OCI-LY7 (cell line): ENCODE measurements at regions of chr1 and their contacts with region 1.

Region 1: GRCh38 chr1:28886731-28887418 is 27.5 kb upstream of the EPB41 start:
- DNase-seq: peak; percentile 94
- H3K4me3 ChIP-seq: peak overlapping the region; percentile 92
- H3K27ac ChIP-seq: peak overlapping the region; percentile 67
- H3K4me1 ChIP-seq: peaks cover 53% of the 10 kb centered on the region
- CTCF ChIP-seq: no peak

Region 2: DNA sequence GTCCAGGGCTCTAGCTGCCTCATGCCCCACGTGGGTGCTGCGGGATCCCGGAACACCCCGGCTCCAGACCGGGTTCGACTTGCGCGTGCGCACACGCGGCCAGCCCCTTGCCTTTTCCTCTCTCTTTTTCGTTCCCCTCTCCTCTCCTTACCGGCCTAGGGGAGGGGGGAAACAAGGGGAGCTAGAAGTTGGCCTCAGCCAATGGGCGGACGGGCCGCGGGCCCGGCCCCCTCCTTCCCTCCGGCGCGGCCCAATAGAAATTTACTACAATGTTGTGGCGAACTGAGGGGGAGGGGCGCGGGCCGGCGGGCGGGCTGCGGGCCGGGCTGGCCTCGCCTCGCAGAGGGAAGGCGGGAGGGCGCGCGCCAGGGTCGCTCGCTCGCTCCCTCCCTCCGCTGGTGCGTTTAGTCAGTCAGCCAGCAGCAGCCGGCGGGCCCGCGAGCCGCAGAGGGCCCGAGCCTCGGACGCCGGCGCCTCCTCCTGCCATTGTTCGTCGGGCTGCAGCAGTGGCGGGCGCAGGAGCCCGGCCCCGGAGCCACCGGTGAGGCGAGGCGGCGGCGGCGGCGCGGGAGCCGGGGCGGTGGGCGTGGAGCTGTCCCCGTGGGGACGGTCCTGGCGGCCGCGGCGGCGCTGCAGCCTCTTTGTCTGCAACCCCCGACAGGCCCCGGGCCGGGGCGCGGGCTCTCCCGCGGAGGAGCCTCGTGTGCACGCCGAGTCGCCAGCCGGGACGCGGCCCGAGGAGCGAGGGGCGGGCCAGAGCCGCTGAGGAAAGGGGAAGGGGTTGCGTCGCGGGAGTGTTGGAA is 27.6 kb after region 1 on chr1 and contains the start of gene EPB41:
- CTCF ChIA-PET with region 1: interaction called, 3 read pairs
- POLR2A ChIA-PET with region 1: interaction called, 4 read pairs
- intact Hi-C with region 1: loop called (anchors 1 kb)
- DNase-seq: peak; percentile 97
- H3K4me3 ChIP-seq: peak within 1 kb of the TSS; percentile 92
- H3K27ac ChIP-seq: peak within 1 kb of the TSS; percentile 68
- H3K4me1 ChIP-seq: peaks cover 19% of the 10 kb centered on the region
- CTCF ChIP-seq: no peak
- total RNA-seq, gene EPB41: 103 and 109 TPM in 2 replicates

Region 3: GRCh38 chr1:29033829-29034466 is 147.1 kb after region 1 on chr1:
- CTCF ChIA-PET with region 1: interaction called, 8 read pairs
- POLR2A ChIA-PET with region 1: interaction called, 4 read pairs
- intact Hi-C with region 1: loop called (anchors 1 kb)
- DNase-seq: peak; percentile 64
- H3K4me3 ChIP-seq: no peak overlapping the region
- H3K27ac ChIP-seq: no peak overlapping the region
- H3K4me1 ChIP-seq: no peaks in the 10 kb centered on the region
- CTCF ChIP-seq: peak; percentile 93

Region 4: GRCh38 chr1:29120961-29121485 is 234.1 kb after region 1 on chr1:
- CTCF ChIA-PET with region 1: no interaction called
- POLR2A ChIA-PET with region 1: no interaction called
- intact Hi-C with region 1: loop called (anchors 1 kb)
- DNase-seq: peak; percentile 76
- H3K4me3 ChIP-seq: no peak overlapping the region
- H3K27ac ChIP-seq: no peak overlapping the region
- H3K4me1 ChIP-seq: no peaks in the 10 kb centered on the region
- CTCF ChIP-seq: peak; percentile 86

Region 5: DNA sequence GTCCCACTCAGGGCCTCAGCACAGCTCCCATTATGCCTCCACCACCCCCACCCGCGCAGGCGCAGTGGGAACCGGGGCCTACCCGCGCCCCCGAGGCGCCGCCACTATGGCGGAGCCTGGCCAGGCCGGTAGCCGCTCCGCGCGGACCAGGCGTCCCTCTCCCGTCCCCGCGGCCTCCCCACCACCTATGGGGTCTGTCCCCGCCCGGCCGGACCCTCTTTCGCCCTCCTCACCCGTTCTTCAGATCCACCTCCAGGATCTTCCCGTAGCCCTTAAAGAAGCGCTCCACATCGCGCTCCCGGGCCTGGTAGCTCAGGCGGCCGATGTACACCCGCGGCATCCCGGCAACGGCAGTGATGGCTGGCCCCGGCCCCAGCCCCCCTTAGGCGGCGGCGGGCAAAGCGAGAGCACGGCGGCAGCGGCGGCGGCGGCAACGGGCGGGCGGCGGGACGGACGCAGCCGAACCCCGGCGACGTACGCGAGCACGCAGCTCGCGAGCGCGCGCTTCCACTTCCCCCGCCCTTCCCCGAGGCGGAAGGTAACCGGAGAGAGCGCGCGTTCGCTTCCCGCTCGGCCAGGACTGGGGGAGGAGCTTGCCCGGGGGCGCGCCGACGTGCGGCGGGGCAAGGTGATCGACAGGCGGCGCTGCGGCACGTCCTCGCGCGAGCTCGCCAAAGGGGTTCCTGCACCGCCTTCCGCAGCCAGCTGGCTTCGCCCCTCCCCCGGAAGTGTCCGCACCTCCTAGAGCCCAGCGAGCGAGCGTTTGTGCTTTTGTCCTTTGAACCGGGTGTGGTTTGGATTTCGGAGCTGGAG is 294.7 kb after region 1 on chr1 and contains the start of gene SRSF4:
- CTCF ChIA-PET with region 1: interaction called, 5 read pairs
- POLR2A ChIA-PET with region 1: interaction called, 7 read pairs
- intact Hi-C with region 1: loop called (anchors 5 kb)
- DNase-seq: peak; percentile 99
- H3K4me3 ChIP-seq: peak within 1 kb of the TSS; percentile 92
- H3K27ac ChIP-seq: peak within 1 kb of the TSS; percentile 82
- H3K4me1 ChIP-seq: peaks cover 25% of the 10 kb centered on the region
- CTCF ChIP-seq: peak; percentile 79
- total RNA-seq, gene SRSF4: 52.8 and 68.6 TPM in 2 replicates

Region 6: DNA sequence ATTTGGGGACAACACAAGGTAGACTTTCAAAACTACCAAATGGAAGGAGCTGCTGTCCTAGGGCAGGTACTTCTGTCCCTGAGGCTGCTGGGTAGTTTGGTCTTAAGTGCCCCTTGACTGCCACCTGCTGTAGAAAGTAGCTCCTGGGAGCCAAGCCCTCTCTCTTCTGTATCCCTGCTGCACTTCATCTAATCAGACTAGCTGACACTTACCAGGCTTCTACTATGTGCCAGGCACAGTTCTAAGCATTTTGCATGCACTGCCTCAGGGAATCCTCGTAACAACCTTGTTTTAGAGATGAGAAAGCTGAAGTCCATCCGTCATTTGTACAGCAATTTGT is 310.7 kb after region 1 on chr1:
- CTCF ChIA-PET with region 1: interaction called, 4 read pairs
- POLR2A ChIA-PET with region 1: no interaction called
- intact Hi-C with region 1: loop called (anchors 1 kb)
- DNase-seq: peak; percentile 67
- H3K4me3 ChIP-seq: no peak overlapping the region
- H3K27ac ChIP-seq: no peak overlapping the region
- H3K4me1 ChIP-seq: no peaks in the 10 kb centered on the region
- CTCF ChIP-seq: peak; percentile 76

Region 7: DNA sequence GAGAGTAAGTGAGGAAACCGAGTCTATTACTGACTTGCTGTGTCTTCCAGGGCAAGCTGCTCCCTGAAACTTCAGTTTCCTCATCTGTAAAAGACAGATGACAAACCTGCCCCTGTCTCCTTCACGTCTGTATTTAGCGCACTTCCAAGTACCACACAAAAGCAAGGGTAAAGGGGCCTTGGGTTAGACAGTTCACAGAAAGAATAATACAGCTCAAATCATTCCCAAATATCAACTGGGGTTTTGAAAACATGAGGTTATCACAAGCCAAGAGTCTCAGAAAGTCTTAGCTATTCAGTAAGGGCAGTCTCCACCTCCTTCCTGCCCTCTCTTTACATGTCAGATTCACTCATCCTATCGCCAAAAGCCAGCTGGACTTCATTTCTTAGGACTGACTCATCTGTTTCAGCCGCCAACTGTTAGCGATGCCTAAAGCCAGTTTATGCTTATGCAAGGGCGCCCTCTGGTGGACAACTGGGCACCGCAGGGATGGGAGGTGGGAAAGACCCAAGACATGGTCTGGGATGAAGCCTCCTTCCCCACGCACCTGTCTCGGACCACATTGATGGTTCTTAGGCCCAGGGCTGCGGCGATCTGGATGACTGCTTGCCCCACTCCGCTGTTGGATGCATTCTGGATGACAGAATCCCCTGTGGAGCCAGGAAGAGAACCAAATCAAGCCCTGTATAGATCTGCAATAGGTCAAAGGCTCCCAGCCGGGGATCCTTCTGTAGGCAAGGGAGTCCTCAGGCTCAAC is 315.9 kb after region 1 on chr1:
- CTCF ChIA-PET with region 1: interaction called, 4 read pairs
- POLR2A ChIA-PET with region 1: no interaction called
- intact Hi-C with region 1: loop called (anchors 1 kb)
- DNase-seq: peak; percentile 85
- H3K4me3 ChIP-seq: no peak overlapping the region
- H3K27ac ChIP-seq: no peak overlapping the region
- H3K4me1 ChIP-seq: no peaks in the 10 kb centered on the region
- CTCF ChIP-seq: peak; percentile 98